PC-3 (cell line): ENCODE measurements at regions of chr18 and their contacts with region 1.

Region 1: DNA sequence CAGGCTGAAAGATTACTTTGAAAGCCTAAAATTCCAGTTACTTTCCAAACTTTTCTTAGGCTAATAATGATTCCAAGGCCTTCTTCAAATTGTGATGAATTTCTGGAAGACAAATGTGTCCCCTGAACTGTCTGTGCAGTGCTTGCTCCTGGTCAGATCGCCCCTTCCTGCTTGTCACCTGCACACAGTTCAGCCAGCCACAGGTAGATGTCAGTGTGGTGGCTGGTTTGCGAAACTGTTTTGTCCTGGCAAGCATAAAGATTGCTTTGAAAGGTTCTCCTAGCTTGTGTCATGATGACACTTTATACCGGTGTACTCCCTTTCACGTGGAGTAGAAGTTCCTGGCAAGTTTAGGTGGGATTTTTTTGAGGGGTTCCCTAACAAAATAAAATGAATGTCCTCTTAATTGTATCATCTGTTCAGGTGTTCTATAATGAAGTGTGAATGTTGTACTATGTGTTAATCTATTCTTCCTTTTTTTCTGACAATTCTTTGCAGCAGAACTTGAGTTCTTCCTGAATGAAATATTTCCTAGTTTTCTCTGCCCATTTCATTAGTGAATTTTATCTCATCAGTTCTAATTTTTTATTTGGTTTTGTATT is 298.8 kb downstream of the ZNF407 start:
- DNase-seq: peak; percentile 73
- ATAC-seq: peak; percentile 72
- H3K4me3 ChIP-seq: no peak overlapping the region
- H3K27ac ChIP-seq: no peak overlapping the region
- H3K4me1 ChIP-seq: peaks cover 30% of the 10 kb centered on the region
- H3K27me3 ChIP-seq: no peaks in the 10 kb centered on the region
- CTCF ChIP-seq: peak; percentile 89

Region 2: GRCh38 chr18:74745633-74746403 is 150.7 kb before region 1 on chr18:
- CTCF ChIA-PET with region 1: no interaction called
- POLR2A ChIA-PET with region 1: no interaction called
- intact Hi-C with region 1: loop called (anchors 5 kb)
- DNase-seq: peak; percentile 89
- ATAC-seq: peak; percentile 99
- H3K4me3 ChIP-seq: peak overlapping the region; percentile 44
- H3K27ac ChIP-seq: peak overlapping the region; percentile 83
- H3K4me1 ChIP-seq: peaks cover 24% of the 10 kb centered on the region
- H3K27me3 ChIP-seq: no peaks in the 10 kb centered on the region
- CTCF ChIP-seq: no peak

Region 3: DNA sequence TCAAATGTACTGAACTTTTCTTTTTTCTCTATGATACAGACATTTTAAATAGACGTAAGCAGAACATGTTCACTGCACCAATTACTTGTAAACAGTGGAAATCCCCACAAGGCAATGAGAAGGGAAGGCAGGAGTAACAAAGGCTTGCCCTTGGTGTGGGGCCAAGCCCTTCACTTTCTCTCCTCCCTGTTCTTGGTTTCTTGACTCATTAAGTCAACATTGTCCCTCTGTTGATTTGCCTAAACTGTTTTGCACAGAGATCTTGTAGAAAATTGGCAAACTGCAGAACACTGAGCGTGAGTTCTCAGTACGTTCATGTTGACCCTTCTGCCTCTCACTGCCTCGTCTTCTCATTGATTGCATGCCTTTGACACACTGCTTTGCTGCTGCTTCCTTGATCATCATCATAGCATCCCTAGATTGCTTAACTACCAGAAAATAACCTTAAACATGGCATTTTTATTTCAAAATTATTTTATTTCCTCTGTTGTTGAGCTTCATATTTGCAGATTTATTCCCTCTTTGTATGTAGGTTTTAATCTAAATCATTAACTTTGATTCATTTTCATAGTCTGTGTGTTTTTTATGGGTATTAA is 54.8 kb after region 1 on chr18:
- CTCF ChIA-PET with region 1: no interaction called
- POLR2A ChIA-PET with region 1: interaction called, 4 read pairs
- intact Hi-C with region 1: loop called (anchors 1 kb)
- DNase-seq: peak; percentile 91
- ATAC-seq: peak; percentile 93
- H3K4me3 ChIP-seq: no peak overlapping the region
- H3K27ac ChIP-seq: peak overlapping the region; percentile 71
- H3K4me1 ChIP-seq: peaks cover 35% of the 10 kb centered on the region
- H3K27me3 ChIP-seq: no peaks in the 10 kb centered on the region
- CTCF ChIP-seq: no peak

Region 4: DNA sequence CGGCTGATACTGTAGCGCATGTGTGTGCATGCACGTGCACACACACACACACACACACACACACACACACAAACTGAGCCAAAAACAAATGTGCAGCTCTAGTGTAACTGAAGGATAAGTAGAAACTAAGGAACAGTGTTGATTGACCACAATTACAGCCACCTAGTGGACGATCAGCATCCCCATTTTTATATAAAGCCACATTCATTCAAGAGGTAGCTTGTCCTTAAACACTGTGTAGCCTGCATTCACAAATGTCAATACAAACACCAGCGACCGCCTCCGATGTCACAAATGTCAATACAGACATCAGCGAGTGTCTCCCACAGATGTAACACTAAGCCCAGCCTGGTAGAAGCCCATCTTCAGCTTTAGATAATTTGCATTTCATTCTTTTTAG is 145.1 kb after region 1 on chr18:
- CTCF ChIA-PET with region 1: interaction called, 13 read pairs
- POLR2A ChIA-PET with region 1: no interaction called
- intact Hi-C with region 1: loop called (anchors 1 kb)
- DNase-seq: peak; percentile 50
- ATAC-seq: peak; percentile 87
- H3K4me3 ChIP-seq: no peak overlapping the region
- H3K27ac ChIP-seq: no peak overlapping the region
- H3K4me1 ChIP-seq: peaks cover 11% of the 10 kb centered on the region
- H3K27me3 ChIP-seq: no peaks in the 10 kb centered on the region
- CTCF ChIP-seq: peak; percentile 78

Region 5: DNA sequence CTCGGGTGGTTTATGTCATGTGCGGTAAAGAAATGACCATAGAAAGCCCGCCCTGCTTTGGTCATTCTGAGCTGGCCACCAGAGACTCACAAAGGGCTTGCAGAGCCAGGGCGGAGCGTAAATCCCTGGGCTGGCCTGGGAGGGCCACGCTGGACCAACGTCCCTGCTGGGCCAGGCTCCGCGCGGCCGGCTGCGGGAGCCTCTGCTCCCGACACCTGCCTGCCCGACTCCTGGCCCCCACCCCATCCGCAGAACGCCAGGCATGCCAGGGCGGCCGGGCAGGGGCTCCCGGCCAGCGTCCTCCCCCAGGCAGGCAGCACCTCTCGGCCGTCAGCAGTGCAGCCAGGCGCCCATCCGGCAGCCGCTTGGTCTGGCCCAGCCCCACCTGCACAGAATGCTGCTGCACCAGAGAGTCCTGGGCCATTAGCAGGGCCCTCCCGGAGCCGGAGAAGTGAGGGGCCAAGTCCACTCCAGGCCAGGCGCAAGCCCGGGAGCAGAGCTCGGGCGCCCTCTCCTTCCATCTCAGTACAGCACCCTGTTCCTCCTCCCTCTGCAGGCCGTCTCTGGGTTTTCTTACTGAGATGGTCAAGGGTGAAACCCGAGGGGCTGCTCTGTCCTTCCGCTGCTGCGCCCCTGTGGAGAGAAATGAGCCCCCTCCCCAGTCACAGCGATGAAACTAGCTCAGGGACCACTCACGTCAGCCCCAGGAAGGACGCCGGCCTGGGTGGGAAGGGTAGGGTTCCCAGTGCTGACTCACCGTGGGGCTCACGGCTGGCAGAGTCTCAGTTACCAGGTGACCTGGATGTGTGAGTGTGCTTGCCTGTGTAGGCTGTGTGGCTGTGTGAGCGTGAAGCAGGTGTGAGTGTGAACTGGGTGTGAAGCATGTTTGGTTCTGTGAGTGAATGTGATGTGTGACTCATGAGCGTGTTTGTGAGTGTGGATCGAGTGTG is 229.2 kb after region 1 on chr18:
- CTCF ChIA-PET with region 1: interaction called, 3 read pairs
- POLR2A ChIA-PET with region 1: no interaction called
- intact Hi-C with region 1: loop called (anchors 5 kb)
- DNase-seq: peak; percentile 39
- ATAC-seq: peak; percentile 81
- H3K4me3 ChIP-seq: peak overlapping the region; percentile 63
- H3K27ac ChIP-seq: peak overlapping the region; percentile 33
- H3K4me1 ChIP-seq: no peaks in the 10 kb centered on the region; the same call in 1 of the 2 replicates
- H3K27me3 ChIP-seq: no peaks in the 10 kb centered on the region
- CTCF ChIP-seq: peak; percentile 34; the same call in 1 of the 2 replicates

Region 6: GRCh38 chr18:75209129-75209950 is 312.8 kb after region 1 on chr18 and contains the start of gene PTGR3:
- CTCF ChIA-PET with region 1: interaction called, 3 read pairs
- POLR2A ChIA-PET with region 1: no interaction called
- intact Hi-C with region 1: loop called (anchors 1 kb)
- DNase-seq: peak; percentile 84
- ATAC-seq: peak; percentile 56
- H3K4me3 ChIP-seq: peak within 1 kb of the TSS; percentile 92
- H3K27ac ChIP-seq: peak within 1 kb of the TSS; percentile 89
- H3K4me1 ChIP-seq: peaks cover 38% of the 10 kb centered on the region
- H3K27me3 ChIP-seq: no peaks in the 10 kb centered on the region
- CTCF ChIP-seq: no peak
- total RNA-seq, gene PTGR3: 8.2 and 8.3 TPM in 2 replicates